ENCODE measurements at regions of chr12 and their contacts with region 1.

Region 1: GRCh38 chr12:111313833-111314259 is 55.0 kb downstream of the PHETA1 start:
- DNase-seq: peak; percentile 13 to 78
- H3K4me3 ChIP-seq: no peak overlapping the region
- H3K27ac ChIP-seq: no peak overlapping the region
- H3K4me1 ChIP-seq: no peaks in the 10 kb centered on the region
- H3K27me3 ChIP-seq: no peaks in the 10 kb centered on the region
- CTCF ChIP-seq: peak; percentile 76 to 88 (median 82)

Region 2: DNA sequence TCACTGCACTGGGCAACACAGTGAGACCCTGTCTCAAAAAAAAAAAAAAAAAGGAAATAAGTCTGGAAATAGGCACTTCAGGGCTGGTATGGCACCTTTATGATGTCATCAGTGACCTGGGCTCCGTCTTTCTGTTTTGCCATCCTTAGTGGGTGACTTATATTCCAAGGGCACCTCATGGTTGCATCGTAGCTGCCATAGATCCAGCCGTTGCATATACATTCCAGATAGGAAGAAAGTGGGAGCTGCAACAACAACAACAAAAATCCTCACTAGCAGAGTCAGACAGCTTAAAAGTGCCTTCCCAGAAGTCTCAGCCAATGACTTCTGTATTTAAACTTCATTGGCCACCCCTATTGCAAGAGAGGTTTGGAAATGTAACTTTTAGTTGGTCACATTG is 419.9 kb before region 1 on chr12:
- intact Hi-C with region 1: loop called (anchors 1 kb)
- DNase-seq: no peak
- H3K4me3 ChIP-seq: no peak overlapping the region
- H3K27ac ChIP-seq: no peak overlapping the region
- H3K4me1 ChIP-seq: no peaks in the 10 kb centered on the region
- H3K27me3 ChIP-seq: no peaks in the 10 kb centered on the region
- CTCF ChIP-seq: no peak

Region 3: DNA sequence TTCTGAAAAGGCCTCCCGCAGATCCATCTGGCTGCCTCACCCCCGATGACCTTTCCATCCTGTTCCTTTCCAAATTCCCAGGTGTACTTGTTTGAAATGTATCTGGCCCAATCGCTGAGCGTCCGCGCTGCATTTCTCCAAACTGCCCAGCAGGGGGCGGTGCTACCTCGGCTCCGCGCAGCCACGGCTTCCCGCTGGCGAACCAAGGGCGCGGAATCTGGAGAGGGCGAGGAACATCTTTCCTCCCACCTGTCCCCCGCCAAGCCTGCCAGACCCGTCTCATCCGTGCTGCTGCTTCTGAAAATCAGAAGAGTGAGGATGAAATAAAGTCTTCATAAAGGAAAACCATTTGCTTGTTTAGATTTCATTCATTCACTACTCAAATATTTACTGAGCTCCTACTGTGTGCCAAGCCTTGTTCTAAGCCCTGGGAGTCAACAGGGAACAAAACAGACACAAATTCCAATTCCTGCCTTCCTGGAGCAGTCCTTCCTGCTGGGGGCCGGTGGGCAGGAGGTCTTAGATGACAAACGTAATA is 376.7 kb before region 1 on chr12:
- intact Hi-C with region 1: loop called (anchors 5 kb)
- DNase-seq: no peak
- H3K4me3 ChIP-seq: no peak overlapping the region
- H3K27ac ChIP-seq: no peak overlapping the region
- H3K4me1 ChIP-seq: no peaks in the 10 kb centered on the region
- H3K27me3 ChIP-seq: no peaks in the 10 kb centered on the region
- CTCF ChIP-seq: peak; percentile 46 to 82 (median 62)

Region 4: DNA sequence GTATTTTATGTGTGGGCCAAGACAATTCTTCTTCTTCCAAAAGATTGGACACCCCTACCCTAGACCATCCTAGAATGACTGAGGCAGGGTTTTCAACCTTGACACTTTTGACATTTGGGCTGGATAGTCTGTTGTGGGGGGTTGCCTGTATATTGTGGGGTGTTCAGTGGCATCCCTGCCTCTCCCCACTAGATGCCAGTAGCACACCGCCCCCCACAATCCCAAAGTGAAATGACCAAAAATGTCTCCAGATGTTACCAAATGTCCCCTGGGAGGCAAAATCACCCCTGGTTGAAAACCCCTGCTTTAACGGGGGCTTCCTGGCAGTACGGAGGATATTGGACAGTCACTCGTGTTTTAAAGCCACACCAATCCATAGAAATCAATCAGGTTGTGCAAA is 164.5 kb before region 1 on chr12:
- intact Hi-C with region 1: no loop called
- DNase-seq: no peak
- H3K4me3 ChIP-seq: no peak overlapping the region
- H3K27ac ChIP-seq: no peak overlapping the region
- H3K4me1 ChIP-seq: no peaks in the 10 kb centered on the region
- H3K27me3 ChIP-seq: no peaks in the 10 kb centered on the region
- CTCF ChIP-seq: no peak